ENCODE measurements at regions of chr1 and their contacts with region 1.

Region 1: GRCh38 chr1:201361652-201362504 is 15.6 kb downstream of the TNNT2 start:
- DNase-seq: peak; percentile 83
- H3K4me3 ChIP-seq: no peak overlapping the region
- H3K27ac ChIP-seq: no peak overlapping the region
- H3K4me1 ChIP-seq: peaks cover 17% of the 10 kb centered on the region
- H3K27me3 ChIP-seq: no peaks in the 10 kb centered on the region
- CTCF ChIP-seq: peak; percentile 93

Region 2: DNA sequence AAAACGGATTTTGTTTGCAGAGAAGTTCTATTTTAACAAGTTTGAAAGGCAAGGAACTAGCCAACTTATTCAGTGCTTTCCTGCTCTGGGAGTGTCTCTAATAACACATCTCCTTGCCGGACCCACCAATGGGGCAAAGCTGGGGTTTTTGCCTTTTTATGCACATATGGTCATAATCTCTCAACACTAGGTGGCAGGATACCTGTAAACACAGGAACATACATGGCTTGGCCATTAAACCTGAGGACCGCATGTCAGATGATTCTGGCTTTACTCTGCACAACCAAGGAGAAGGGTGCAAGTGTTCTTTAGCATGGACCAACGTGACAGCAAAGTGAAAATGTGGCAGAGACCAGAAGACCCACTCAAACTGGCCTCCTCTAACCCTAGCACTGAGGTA is 212.5 kb before region 1 on chr1:
- CTCF ChIA-PET with region 1: interaction called, 4 read pairs
- POLR2A ChIA-PET with region 1: no interaction called
- intact Hi-C with region 1: loop called (anchors 1 kb)
- DNase-seq: peak; percentile 56
- H3K4me3 ChIP-seq: no peak overlapping the region
- H3K27ac ChIP-seq: no peak overlapping the region
- H3K4me1 ChIP-seq: peaks cover 10% of the 10 kb centered on the region
- H3K27me3 ChIP-seq: no peaks in the 10 kb centered on the region
- CTCF ChIP-seq: peak; percentile 50; the same call in 1 of the 2 replicates

Region 3: DNA sequence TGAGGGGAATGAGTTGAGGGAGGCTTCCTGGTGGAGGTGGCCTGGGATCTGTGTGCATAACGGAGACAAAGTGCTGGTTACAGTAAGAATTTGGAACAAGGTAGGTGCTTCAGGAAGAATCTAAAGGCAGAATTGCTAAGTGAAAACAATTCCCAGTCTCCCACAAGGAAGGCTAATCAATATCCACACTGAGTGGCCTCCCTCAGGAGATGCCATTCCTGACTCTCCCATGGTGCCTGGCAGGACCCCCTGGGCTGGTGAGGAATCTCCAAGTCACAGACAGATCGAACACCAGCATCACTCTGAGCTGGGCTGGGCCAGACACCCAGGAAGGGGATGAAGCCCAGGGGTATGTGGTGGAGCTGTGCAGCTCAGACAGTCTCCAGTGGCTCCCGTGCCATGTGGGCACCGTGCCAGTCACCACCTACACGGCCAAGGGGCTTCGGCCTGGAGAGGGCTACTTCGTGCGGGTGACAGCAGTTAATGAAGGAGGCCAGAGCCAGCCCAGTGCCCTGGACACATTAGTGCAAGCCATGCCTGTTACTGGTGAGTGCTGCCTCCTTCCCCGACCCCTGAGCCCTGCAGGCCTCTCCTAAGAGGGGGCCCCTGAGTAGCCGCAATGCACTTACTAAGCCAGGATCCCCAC is 140.6 kb before region 1 on chr1:
- CTCF ChIA-PET with region 1: interaction called, 12 read pairs
- POLR2A ChIA-PET with region 1: no interaction called
- intact Hi-C with region 1: no loop called
- DNase-seq: no peak
- H3K4me3 ChIP-seq: no peak overlapping the region
- H3K27ac ChIP-seq: no peak overlapping the region
- H3K4me1 ChIP-seq: no peaks in the 10 kb centered on the region
- H3K27me3 ChIP-seq: no peaks in the 10 kb centered on the region
- CTCF ChIP-seq: no peak

Region 4: GRCh38 chr1:201254625-201255506 is 107.0 kb before region 1 on chr1:
- CTCF ChIA-PET with region 1: interaction called, 14 read pairs
- POLR2A ChIA-PET with region 1: no interaction called
- intact Hi-C with region 1: loop called (anchors 1 kb)
- DNase-seq: peak; percentile 78
- H3K4me3 ChIP-seq: no peak overlapping the region
- H3K27ac ChIP-seq: peak overlapping the region; percentile 63
- H3K4me1 ChIP-seq: peaks cover 4% of the 10 kb centered on the region
- H3K27me3 ChIP-seq: no peaks in the 10 kb centered on the region
- CTCF ChIP-seq: peak; percentile 99

Region 5: GRCh38 chr1:201348211-201348566 is 13.7 kb before region 1 on chr1:
- CTCF ChIA-PET with region 1: interaction called, 16 read pairs
- POLR2A ChIA-PET with region 1: interaction called, 3 read pairs
- intact Hi-C with region 1: no loop called
- DNase-seq: peak; percentile 87
- H3K4me3 ChIP-seq: no peak overlapping the region
- H3K27ac ChIP-seq: no peak overlapping the region
- H3K4me1 ChIP-seq: peaks cover 26% of the 10 kb centered on the region
- H3K27me3 ChIP-seq: no peaks in the 10 kb centered on the region
- CTCF ChIP-seq: peak; percentile 86

Region 6: DNA sequence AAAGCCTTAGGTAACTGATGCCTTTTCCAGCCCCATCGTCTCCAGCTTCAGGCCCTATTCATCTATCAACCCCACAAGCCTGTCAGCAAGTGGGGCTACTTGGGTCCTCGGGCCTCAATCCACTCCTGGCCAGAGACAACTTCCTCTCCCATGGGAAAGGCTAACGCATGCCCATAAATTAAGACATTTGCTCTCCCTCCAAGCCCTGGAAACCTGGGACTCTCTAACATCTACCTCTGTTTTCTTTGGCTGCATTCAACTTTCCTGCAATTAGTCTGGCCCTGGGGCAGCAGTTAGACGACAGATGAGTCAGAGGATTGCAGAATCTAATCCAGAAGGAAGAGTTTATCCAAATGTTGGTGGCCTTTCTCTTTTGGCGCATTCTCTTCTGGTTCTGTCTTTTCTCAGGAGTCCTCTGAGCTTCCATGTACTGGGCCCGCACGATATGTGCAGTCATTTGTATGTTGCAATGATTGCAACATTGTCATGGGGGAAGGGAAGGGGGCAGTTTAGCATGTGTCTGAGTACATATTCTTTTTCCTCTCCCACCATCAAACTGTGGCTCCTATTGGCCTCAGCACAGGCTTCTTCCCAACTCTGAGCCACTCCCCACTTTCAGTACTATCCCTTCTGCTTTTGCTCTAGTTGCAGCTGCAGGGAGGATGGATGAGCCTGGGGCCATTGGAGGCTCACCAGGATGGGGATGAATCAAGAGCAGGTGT is 231.5 kb after region 1 on chr1:
- CTCF ChIA-PET with region 1: no interaction called
- POLR2A ChIA-PET with region 1: no interaction called
- intact Hi-C with region 1: no loop called
- DNase-seq: peak; percentile 38
- H3K4me3 ChIP-seq: no peak overlapping the region
- H3K27ac ChIP-seq: no peak overlapping the region
- H3K4me1 ChIP-seq: peaks cover 15% of the 10 kb centered on the region
- H3K27me3 ChIP-seq: no peaks in the 10 kb centered on the region
- CTCF ChIP-seq: no peak

Region 7: DNA sequence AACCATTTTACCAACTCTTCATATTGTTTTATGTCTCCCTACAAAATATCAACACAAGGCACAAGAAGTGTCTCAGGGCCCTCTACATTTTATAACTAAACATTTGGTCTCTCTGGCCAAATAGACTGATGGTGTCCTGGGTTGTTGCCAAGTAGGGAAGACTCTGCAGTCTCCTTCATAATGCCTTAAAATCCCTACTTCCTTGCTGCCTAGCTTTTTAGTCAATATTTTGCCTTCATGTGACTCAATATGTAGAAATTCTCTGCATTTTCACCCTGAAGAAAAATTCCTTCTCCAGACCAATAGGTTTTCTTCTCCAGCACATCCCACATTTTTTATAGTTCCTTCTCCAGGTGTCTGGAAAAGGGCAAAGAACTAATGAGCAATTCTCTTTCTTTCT is 394.5 kb after region 1 on chr1:
- CTCF ChIA-PET with region 1: no interaction called
- POLR2A ChIA-PET with region 1: no interaction called
- intact Hi-C with region 1: no loop called
- DNase-seq: peak; percentile 31
- H3K4me3 ChIP-seq: no peak overlapping the region
- H3K27ac ChIP-seq: no peak overlapping the region
- H3K4me1 ChIP-seq: peaks cover 48% of the 10 kb centered on the region
- H3K27me3 ChIP-seq: no peaks in the 10 kb centered on the region
- CTCF ChIP-seq: no peak